CD8-positive, alpha-beta T cell (primary cell): ENCODE measurements at regions of chr10 and their contacts with region 1.

Region 1: GRCh38 chr10:47358457-47358856 is 10.3 kb downstream of the RBP3 start:
- DNase-seq: no peak
- ATAC-seq: no peak
- H3K4me3 ChIP-seq: no peak overlapping the region
- H3K4me3 Mint-ChIP-seq: no peak overlapping the region
- H3K27ac ChIP-seq: no peak overlapping the region
- H3K27ac Mint-ChIP-seq: no peak overlapping the region
- H3K4me1 ChIP-seq: no peaks in the 10 kb centered on the region
- H3K4me1 Mint-ChIP-seq: no peaks in the 10 kb centered on the region
- H3K27me3 ChIP-seq: no peaks in the 10 kb centered on the region
- H3K27me3 Mint-ChIP-seq: no peaks in the 10 kb centered on the region
- CTCF ChIP-seq: no peak

Region 2: GRCh38 chr10:47318706-47319105 is 39.8 kb before region 1 on chr10:
- CTCF ChIA-PET with region 1: no interaction called
- POLR2A ChIA-PET with region 1: no interaction called
- intact Hi-C with region 1: no loop called
- DNase-seq: no peak
- ATAC-seq: no peak
- H3K4me3 ChIP-seq: no peak overlapping the region
- H3K4me3 Mint-ChIP-seq: no peak overlapping the region
- H3K27ac ChIP-seq: no peak overlapping the region
- H3K27ac Mint-ChIP-seq: no peak overlapping the region
- H3K4me1 ChIP-seq: no peaks in the 10 kb centered on the region
- H3K4me1 Mint-ChIP-seq: no peaks in the 10 kb centered on the region
- H3K27me3 ChIP-seq: no peaks in the 10 kb centered on the region
- H3K27me3 Mint-ChIP-seq: no peaks in the 10 kb centered on the region
- CTCF ChIP-seq: no peak

Region 3: GRCh38 chr10:47340608-47341170 is 17.8 kb before region 1 on chr10:
- CTCF ChIA-PET with region 1: interaction called, 10 read pairs
- POLR2A ChIA-PET with region 1: no interaction called
- intact Hi-C with region 1: no loop called
- DNase-seq: peak; percentile 52 to 82 (median 70)
- ATAC-seq: peak; percentile 77
- H3K4me3 ChIP-seq: no peak overlapping the region
- H3K4me3 Mint-ChIP-seq: no peak overlapping the region
- H3K27ac ChIP-seq: no peak overlapping the region
- H3K27ac Mint-ChIP-seq: no peak overlapping the region
- H3K4me1 ChIP-seq: no peaks in the 10 kb centered on the region
- H3K4me1 Mint-ChIP-seq: no peaks in the 10 kb centered on the region
- H3K27me3 ChIP-seq: no peaks in the 10 kb centered on the region
- H3K27me3 Mint-ChIP-seq: peaks cover 3% of the 10 kb centered on the region
- CTCF ChIP-seq: peak; percentile 97

Region 4: GRCh38 chr10:47406870-47407691 is 48.6 kb after region 1 on chr10:
- CTCF ChIA-PET with region 1: no interaction called
- POLR2A ChIA-PET with region 1: no interaction called
- intact Hi-C with region 1: no loop called
- DNase-seq: peak in 1 of 9 experiments; percentile 32
- ATAC-seq: no peak
- H3K4me3 ChIP-seq: no peak overlapping the region
- H3K4me3 Mint-ChIP-seq: no peak overlapping the region
- H3K27ac ChIP-seq: no peak overlapping the region
- H3K27ac Mint-ChIP-seq: no peak overlapping the region
- H3K4me1 ChIP-seq: no peaks in the 10 kb centered on the region
- H3K4me1 Mint-ChIP-seq: no peaks in the 10 kb centered on the region
- H3K27me3 ChIP-seq: no peaks in the 10 kb centered on the region
- H3K27me3 Mint-ChIP-seq: no peaks in the 10 kb centered on the region
- CTCF ChIP-seq: no peak